GM12878 (cell line): ENCODE measurements at regions of chr17 and their contacts with region 1.

Region 1: DNA sequence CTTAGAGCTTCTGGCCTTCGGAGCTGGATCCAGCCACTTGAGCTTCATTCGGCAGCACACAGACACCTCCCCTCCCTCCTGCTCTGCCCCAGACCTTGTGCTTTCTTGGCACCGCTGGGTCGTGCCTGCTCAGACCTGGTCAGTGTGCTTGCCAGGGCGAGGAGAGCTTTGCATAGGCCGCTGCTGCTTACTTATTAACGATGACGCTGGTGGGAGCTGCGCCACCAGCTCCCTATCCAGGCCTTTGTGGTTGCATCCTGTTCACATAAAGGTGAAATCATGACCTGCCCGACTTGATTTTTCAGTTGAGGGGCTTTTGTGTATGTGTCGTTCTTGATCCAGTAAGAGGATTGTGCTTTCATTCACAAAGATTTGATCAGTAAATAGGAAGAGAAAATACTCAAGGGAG is 101.1 kb downstream of the MSI2 start:
- DNase-seq: no peak
- ATAC-seq: peak; percentile 81
- H3K4me3 ChIP-seq: peak overlapping the region; percentile 40
- H3K27ac ChIP-seq: peak overlapping the region; percentile 96
- H3K4me1 ChIP-seq: peaks cover 59% of the 10 kb centered on the region
- H3K27me3 ChIP-seq: no peaks in the 10 kb centered on the region
- CTCF ChIP-seq: no peak
- EP300 ChIP-seq: no peak; a peak in 1 of 4 replicates
- POLR2A ChIP-seq: peak; percentile 68
- RAD21 ChIP-seq: no peak

Region 2: GRCh38 chr17:57255776-57256681 is 101.4 kb before region 1 on chr17 and contains the start of gene MSI2:
- CTCF ChIA-PET with region 1: interaction called, 5 read pairs
- POLR2A ChIA-PET with region 1: interaction called, 15 read pairs
- RAD21 ChIA-PET with region 1: interaction called, 19 read pairs
- SMC1A ChIA-PET with region 1: interaction called, 22 read pairs
- in situ Hi-C with region 1: no loop called
- intact Hi-C with region 1: loop called (anchors 5 kb)
- DNase-seq: peak; percentile 51
- ATAC-seq: peak; percentile 82
- H3K4me3 ChIP-seq: peak within 1 kb of the TSS; percentile 95
- H3K27ac ChIP-seq: peak within 1 kb of the TSS; percentile 34
- H3K4me1 ChIP-seq: peaks cover 6% of the 10 kb centered on the region
- H3K27me3 ChIP-seq: no peaks in the 10 kb centered on the region
- CTCF ChIP-seq: no peak
- EP300 ChIP-seq: no peak
- POLR2A ChIP-seq: no peak
- RAD21 ChIP-seq: no peak
- polyA plus RNA-seq, gene MSI2: 6.1 to 9.5 TPM

Region 3: DNA sequence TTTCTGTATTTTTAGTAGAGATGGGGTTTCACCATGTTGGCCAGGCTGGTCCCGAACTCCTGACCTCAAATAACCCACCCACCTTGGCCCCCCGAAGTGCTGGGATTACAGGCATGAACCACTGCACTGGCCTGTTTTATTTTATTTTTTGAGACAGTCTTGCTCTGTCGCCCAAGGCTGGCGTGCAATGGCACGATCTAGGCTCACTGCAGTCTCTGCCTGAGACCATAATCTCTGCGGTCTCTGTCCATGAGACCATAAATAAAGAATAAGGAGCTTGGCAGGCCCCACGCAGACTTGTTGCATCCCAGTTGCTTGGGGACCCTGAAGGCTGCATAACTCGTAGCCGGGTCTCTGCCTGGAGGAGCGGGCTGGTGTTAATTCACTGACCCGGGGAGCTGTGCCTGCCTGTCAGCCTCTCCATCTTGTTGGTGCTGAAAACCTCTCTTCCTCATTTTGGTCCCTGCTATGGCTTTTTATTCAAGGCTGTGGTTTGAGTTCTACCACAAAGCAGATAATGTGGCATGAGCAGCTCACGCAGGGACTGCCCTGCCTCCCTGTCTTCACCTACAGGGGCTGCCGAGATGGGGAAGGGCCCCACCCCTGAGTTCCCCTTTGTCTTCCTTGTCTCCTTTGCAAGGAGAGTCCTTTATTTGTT is 19.0 kb before region 1 on chr17:
- CTCF ChIA-PET with region 1: interaction called, 5 read pairs
- POLR2A ChIA-PET with region 1: interaction called, 11 read pairs
- RAD21 ChIA-PET with region 1: interaction called, 38 read pairs
- SMC1A ChIA-PET with region 1: interaction called, 10 read pairs
- in situ Hi-C with region 1: no loop called
- intact Hi-C with region 1: loop called (anchors 2 kb)
- DNase-seq: peak; percentile 64
- ATAC-seq: peak; percentile 92
- H3K4me3 ChIP-seq: peak overlapping the region; percentile 20; the same call in 1 of the 2 replicates
- H3K27ac ChIP-seq: peak overlapping the region; percentile 64
- H3K4me1 ChIP-seq: peaks cover 29% of the 10 kb centered on the region
- H3K27me3 ChIP-seq: no peaks in the 10 kb centered on the region
- CTCF ChIP-seq: no peak
- EP300 ChIP-seq: peak; percentile 61 to 73; a peak in 3 of 4 replicates
- POLR2A ChIP-seq: no peak
- RAD21 ChIP-seq: 0 out of 2 replicates have a peak, but pooled peaks have one; percentile 5

Region 4: GRCh38 chr17:57401556-57402488 is 44.4 kb after region 1 on chr17:
- CTCF ChIA-PET with region 1: interaction called, 6 read pairs
- POLR2A ChIA-PET with region 1: no interaction called
- RAD21 ChIA-PET with region 1: interaction called, 9 read pairs
- SMC1A ChIA-PET with region 1: interaction called, 15 read pairs
- in situ Hi-C with region 1: no loop called
- intact Hi-C with region 1: no loop called
- DNase-seq: no peak
- ATAC-seq: peak; percentile 38; the same call in 2 of the 3 replicates
- H3K4me3 ChIP-seq: no peak overlapping the region
- H3K27ac ChIP-seq: no peak overlapping the region
- H3K4me1 ChIP-seq: no peaks in the 10 kb centered on the region
- H3K27me3 ChIP-seq: no peaks in the 10 kb centered on the region
- CTCF ChIP-seq: peak; percentile 18 to 26 (median 20); a peak in 3 of 6 replicates
- EP300 ChIP-seq: no peak
- POLR2A ChIP-seq: no peak
- RAD21 ChIP-seq: peak; percentile 51

Region 5: GRCh38 chr17:57455063-57455914 is 97.9 kb after region 1 on chr17:
- CTCF ChIA-PET with region 1: interaction called, 5 read pairs
- POLR2A ChIA-PET with region 1: interaction called, 8 read pairs
- RAD21 ChIA-PET with region 1: interaction called, 30 read pairs
- SMC1A ChIA-PET with region 1: interaction called, 13 read pairs
- in situ Hi-C with region 1: no loop called
- intact Hi-C with region 1: loop called (anchors 1 kb)
- DNase-seq: peak; percentile 94
- ATAC-seq: peak; percentile 91
- H3K4me3 ChIP-seq: no peak overlapping the region
- H3K27ac ChIP-seq: peak overlapping the region; percentile 98
- H3K4me1 ChIP-seq: peaks cover 73% of the 10 kb centered on the region
- H3K27me3 ChIP-seq: no peaks in the 10 kb centered on the region
- CTCF ChIP-seq: no peak
- EP300 ChIP-seq: peak; percentile 95 to 99
- POLR2A ChIP-seq: peak; percentile 59
- RAD21 ChIP-seq: peak; percentile 35

Region 6: GRCh38 chr17:57468932-57469775 is 111.8 kb after region 1 on chr17:
- CTCF ChIA-PET with region 1: interaction called, 3 read pairs
- POLR2A ChIA-PET with region 1: interaction called, 5 read pairs
- RAD21 ChIA-PET with region 1: interaction called, 14 read pairs
- SMC1A ChIA-PET with region 1: interaction called, 8 read pairs
- in situ Hi-C with region 1: no loop called
- intact Hi-C with region 1: no loop called
- DNase-seq: peak; percentile 68
- ATAC-seq: peak; percentile 74
- H3K4me3 ChIP-seq: no peak overlapping the region
- H3K27ac ChIP-seq: peak overlapping the region; percentile 93
- H3K4me1 ChIP-seq: peaks cover 56% of the 10 kb centered on the region
- H3K27me3 ChIP-seq: no peaks in the 10 kb centered on the region
- CTCF ChIP-seq: no peak
- EP300 ChIP-seq: peak; percentile 57 to 84; a peak in 3 of 4 replicates
- POLR2A ChIP-seq: no peak
- RAD21 ChIP-seq: no peak